ENCODE measurements at regions of chr4 and their contacts with region 1.

Region 1: DNA sequence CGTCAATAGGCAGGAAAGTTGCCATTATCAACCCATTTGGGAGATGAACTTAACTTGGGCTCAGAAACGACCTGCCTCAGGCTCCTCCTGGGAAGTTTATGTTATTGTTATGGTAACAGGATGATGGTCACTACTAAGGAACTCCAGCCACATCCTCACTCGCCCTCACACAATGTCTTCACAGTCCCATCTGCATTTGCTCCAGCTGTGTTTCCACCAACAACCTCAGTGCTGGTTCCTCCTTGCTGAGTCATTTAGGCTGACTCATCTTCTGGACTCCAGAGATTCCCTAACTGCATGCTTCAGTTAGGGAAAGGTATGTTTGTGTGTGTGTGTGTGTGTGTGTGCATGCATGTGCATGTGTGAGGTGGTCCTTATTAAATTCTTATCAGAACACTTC is 293.4 kb upstream of the BOD1L1 start:
- DNase-seq: peak; percentile 100
- H3K4me3 ChIP-seq: no peak overlapping the region
- CTCF ChIP-seq: no peak

Region 2: GRCh38 chr4:13694256-13694655 is 226.6 kb before region 1 on chr4:
- CTCF ChIA-PET with region 1: no interaction called
- POLR2A ChIA-PET with region 1: no interaction called
- DNase-seq: no peak
- H3K4me3 ChIP-seq: no peak overlapping the region
- CTCF ChIP-seq: no peak

Region 3: DNA sequence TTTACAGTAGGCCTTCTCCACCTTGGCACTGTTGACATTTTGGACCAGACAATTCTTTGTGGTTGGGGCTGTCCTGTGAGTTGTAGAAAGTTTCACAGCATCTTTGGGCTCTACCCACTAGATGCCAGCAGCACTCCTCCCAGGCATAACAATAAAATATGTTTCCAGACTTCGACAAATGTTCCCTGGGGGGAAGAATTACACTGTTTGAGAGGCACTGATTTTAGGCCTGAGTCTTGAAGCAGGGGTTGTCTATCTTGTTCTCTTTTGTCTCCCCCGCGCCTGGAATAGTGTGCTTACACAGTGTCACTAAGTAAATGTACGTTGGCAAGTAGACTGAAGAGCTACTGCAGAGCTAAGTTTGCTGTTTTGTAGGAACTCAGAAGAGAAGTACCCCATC is 39.0 kb before region 1 on chr4:
- CTCF ChIA-PET with region 1: no interaction called
- POLR2A ChIA-PET with region 1: no interaction called
- DNase-seq: no peak
- H3K4me3 ChIP-seq: no peak overlapping the region
- CTCF ChIP-seq: peak; percentile 30

Region 4: GRCh38 chr4:13907255-13907751 is 13.6 kb before region 1 on chr4:
- CTCF ChIA-PET with region 1: interaction called, 46 read pairs
- POLR2A ChIA-PET with region 1: interaction called, 44 read pairs
- DNase-seq: peak; percentile 98
- H3K4me3 ChIP-seq: no peak overlapping the region
- CTCF ChIP-seq: peak; percentile 59

Region 5: GRCh38 chr4:13933191-13933590 is 12.3 kb after region 1 on chr4:
- CTCF ChIA-PET with region 1: interaction called, 15 read pairs
- POLR2A ChIA-PET with region 1: interaction called, 6 read pairs
- DNase-seq: peak; percentile 63
- H3K4me3 ChIP-seq: no peak overlapping the region
- CTCF ChIP-seq: peak; percentile 23

Region 6: DNA sequence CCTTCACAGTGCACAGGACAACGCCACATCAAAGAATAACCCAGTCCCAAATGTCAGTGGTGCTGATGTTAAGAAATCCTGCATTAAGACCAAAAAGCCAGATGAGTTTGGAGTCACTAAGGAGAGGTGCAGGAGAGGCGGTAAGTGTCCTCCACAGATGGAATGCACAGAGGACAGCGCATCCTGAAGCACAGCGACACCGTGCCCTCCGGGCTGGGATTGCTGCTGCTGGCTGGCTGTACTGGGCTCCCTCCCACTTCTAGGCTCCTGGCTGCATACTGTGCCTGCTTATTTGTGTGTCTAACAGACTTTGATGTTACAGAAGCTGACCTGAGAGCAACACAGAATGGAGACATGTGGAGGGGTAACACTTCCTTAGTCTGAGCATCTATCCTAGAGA is 32.2 kb after region 1 on chr4:
- CTCF ChIA-PET with region 1: no interaction called
- POLR2A ChIA-PET with region 1: no interaction called
- DNase-seq: no peak
- H3K4me3 ChIP-seq: no peak overlapping the region
- CTCF ChIP-seq: no peak

Region 7: DNA sequence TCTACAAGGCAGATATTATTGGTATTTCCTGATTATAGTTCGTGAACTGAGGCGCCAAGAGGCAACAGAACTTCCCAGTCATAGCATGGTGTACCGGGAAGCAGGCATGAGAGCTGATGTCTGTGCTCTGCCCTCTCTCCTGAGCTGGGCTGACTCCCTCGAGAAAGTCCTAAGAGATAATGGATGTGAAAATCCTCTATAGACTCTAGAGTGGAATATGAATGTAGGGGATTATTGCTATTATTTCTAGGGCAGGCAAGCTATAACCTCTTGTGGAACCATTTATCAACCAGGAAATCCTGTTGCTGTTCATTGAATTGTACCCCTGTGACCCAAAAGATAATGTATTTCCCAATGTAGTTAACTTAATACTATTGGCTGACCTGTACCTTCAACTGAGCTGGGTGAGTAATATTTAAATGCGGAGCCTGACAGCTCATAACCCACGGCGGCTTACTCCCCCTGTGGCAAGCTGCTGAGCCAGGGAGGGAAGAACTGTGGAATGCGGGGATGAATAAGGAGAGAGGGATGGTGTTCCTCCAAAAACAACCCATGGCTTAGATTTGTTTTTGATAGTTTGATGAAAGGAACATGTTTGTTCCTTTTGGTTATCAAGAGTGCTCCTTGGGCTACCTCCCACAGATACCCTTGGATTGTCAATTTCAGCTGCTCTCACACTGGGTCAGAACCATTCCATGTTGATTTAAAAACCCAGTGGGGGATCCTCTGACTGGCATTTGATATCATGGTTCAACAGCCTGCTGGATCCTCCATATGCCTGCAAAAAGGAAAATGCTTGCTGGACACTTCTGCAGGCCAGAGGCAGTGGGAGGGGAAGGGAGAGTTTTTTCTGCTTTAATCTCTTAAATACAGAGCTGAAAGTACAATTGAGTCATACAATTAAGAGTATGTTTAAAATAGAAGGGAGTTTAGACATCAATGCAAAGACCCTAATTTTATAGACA is 45.6 kb after region 1 on chr4:
- CTCF ChIA-PET with region 1: interaction called, 3 read pairs
- POLR2A ChIA-PET with region 1: interaction called, 12 read pairs
- DNase-seq: no peak
- H3K4me3 ChIP-seq: no peak overlapping the region
- CTCF ChIP-seq: no peak

Region 8: GRCh38 chr4:14504162-14504561 is 583.3 kb after region 1 on chr4:
- CTCF ChIA-PET with region 1: no interaction called
- POLR2A ChIA-PET with region 1: no interaction called
- DNase-seq: no peak
- H3K4me3 ChIP-seq: no peak overlapping the region
- CTCF ChIP-seq: no peak

Measured in AG04449 (cell line).